HEK293 (cell line): ENCODE measurements at regions of chr12 and their contacts with region 1.

Region 1: GRCh38 chr12:48165094-48165981 is 8.0 kb upstream of the ASB8 start:
- H3K4me3 ChIP-seq: no peak overlapping the region
- H3K27ac ChIP-seq: no peak overlapping the region
- H3K4me1 ChIP-seq: no peaks in the 10 kb centered on the region
- CTCF ChIP-seq: peak; percentile 31; the same call in 1 of the 2 replicates

Region 2: DNA sequence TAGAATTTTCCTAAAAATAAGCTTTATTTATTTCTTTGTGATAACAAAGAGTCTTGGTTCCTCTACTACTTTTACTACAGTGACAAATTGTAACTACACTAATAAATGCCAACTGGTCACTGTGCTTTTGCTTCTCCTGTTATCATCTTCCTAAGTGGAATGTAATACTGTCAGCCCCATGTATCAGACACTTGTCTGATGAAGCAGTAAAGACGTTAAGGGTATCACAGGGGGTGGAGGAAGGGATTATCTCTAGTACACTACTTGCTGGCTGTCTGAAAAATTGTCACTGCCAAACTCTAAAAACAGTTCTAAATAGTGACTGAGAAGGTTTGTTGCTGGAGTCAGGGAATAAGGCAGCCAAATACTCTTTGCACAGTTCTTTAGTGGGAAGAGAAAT is 19.4 kb before region 1 on chr12:
- CTCF ChIA-PET with region 1: interaction called, 13 read pairs
- POLR2A ChIA-PET with region 1: no interaction called
- H3K4me3 ChIP-seq: no peak overlapping the region
- H3K27ac ChIP-seq: no peak overlapping the region
- H3K4me1 ChIP-seq: peaks cover 4% of the 10 kb centered on the region; the same call in 1 of the 2 replicates
- CTCF ChIP-seq: no peak

Region 3: DNA sequence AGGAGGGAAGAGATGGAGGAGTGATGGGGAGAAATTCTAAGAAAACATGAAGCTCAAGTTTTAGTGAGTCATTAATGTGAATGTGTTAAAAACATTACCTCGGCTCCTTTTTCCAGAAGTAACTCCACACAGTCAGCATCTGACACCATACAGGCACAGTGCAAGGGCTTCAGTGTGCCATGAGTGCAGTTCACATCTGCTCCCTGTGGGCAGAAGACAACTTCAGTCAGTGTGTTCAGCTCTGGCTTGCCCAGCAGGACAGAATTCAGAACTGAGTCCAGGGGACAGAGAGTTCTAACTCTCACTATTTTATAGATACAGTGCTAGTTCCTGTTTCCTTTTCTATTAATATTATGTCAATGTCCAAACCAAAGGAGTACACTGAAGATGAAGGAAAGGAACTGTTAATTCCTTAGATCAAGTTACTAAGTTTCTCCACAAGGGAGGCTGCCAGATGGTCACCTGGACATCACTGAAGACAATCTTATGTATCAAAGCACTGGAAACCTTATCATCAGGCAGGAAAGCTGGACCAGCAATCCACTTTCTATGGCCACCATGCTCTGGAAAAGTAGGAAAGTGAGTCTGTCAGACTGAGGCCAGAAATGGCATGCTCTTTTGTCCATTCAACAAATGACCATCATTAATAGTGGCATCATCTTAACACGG is 14.1 kb before region 1 on chr12:
- CTCF ChIA-PET with region 1: interaction called, 13 read pairs
- POLR2A ChIA-PET with region 1: no interaction called
- H3K4me3 ChIP-seq: no peak overlapping the region
- H3K27ac ChIP-seq: no peak overlapping the region
- H3K4me1 ChIP-seq: peaks cover 1% of the 10 kb centered on the region; the same call in 1 of the 2 replicates
- CTCF ChIP-seq: no peak

Region 4: GRCh38 chr12:48180857-48181495 is 15.6 kb after region 1 on chr12:
- CTCF ChIA-PET with region 1: interaction called, 13 read pairs
- POLR2A ChIA-PET with region 1: interaction called, 4 read pairs
- H3K4me3 ChIP-seq: no peak overlapping the region
- H3K27ac ChIP-seq: no peak overlapping the region
- H3K4me1 ChIP-seq: 0 out of 2 replicates have a peak, but pooled peaks cover 1% of the 10 kb centered on the region
- CTCF ChIP-seq: no peak

Region 5: GRCh38 chr12:48189331-48190125 is 24.2 kb after region 1 on chr12:
- CTCF ChIA-PET with region 1: interaction called, 19 read pairs
- POLR2A ChIA-PET with region 1: no interaction called
- H3K4me3 ChIP-seq: no peak overlapping the region
- H3K27ac ChIP-seq: no peak overlapping the region
- H3K4me1 ChIP-seq: no peaks in the 10 kb centered on the region
- CTCF ChIP-seq: peak; percentile 29; the same call in 1 of the 2 replicates

Region 6: GRCh38 chr12:48202766-48203165 is 37.4 kb after region 1 on chr12:
- CTCF ChIA-PET with region 1: no interaction called
- POLR2A ChIA-PET with region 1: no interaction called
- H3K4me3 ChIP-seq: no peak overlapping the region
- H3K27ac ChIP-seq: no peak overlapping the region
- H3K4me1 ChIP-seq: peaks cover 12% of the 10 kb centered on the region
- CTCF ChIP-seq: no peak

Region 7: GRCh38 chr12:48247181-48247966 is 82.0 kb after region 1 on chr12:
- CTCF ChIA-PET with region 1: no interaction called
- POLR2A ChIA-PET with region 1: no interaction called
- H3K4me3 ChIP-seq: no peak overlapping the region
- H3K27ac ChIP-seq: no peak overlapping the region
- H3K4me1 ChIP-seq: no peaks in the 10 kb centered on the region
- CTCF ChIP-seq: no peak

Region 8: GRCh38 chr12:48316491-48316890 is 151.2 kb after region 1 on chr12:
- CTCF ChIA-PET with region 1: no interaction called
- POLR2A ChIA-PET with region 1: no interaction called
- H3K4me3 ChIP-seq: no peak overlapping the region
- H3K27ac ChIP-seq: no peak overlapping the region
- H3K4me1 ChIP-seq: no peaks in the 10 kb centered on the region
- CTCF ChIP-seq: no peak

Region 9: GRCh38 chr12:48618541-48618940 is 453.2 kb after region 1 on chr12:
- CTCF ChIA-PET with region 1: interaction called, 14 read pairs
- POLR2A ChIA-PET with region 1: no interaction called
- H3K4me3 ChIP-seq: no peak overlapping the region
- H3K27ac ChIP-seq: no peak overlapping the region
- H3K4me1 ChIP-seq: no peaks in the 10 kb centered on the region
- CTCF ChIP-seq: peak; percentile 87